Spleen (tissue), 13 donors: ENCODE measurements at regions of chr12 and their contacts with region 1.

Region 1: DNA sequence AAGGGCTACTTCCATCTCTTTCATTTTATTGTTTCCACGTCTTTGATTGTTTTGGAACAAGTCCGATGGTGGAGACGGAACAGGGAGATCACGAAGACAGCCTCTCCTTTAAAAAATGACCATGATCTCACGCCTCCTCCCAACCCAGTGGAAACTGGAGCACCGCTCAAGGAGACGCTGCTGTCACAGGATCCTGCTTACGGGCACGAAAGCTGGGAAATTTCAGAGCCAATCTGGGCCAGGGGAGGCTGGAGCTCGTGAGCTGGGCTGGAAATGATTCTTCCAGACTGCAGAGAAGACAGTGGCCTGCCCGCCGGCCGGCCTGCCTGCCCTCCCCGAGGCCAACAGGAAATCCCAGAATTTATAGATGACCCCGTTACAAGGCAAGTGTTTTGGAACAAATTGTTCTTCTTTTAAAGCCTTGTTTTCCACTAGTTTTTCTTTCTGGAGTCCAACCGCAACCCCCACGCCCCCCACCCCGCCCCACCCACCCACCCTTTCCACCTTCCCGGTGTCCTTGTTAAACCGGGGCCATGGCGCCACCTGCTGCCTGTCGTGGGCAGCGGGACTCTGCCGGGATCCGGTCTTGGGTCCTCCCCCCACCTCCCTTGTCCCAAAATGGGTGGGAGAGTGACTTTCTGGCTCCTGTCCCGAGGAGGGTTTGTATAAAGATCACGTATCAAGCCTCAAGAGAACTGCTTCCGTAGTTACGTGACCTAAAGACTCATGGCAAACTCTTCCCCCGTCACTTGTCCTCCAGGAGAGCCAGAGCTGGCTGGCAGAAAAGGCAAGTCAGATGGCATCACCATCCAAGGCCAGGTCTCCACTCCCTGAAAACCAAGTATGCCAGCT is 40.3 kb downstream of the MAP1LC3B2 start:
- DNase-seq: peak; percentile 94
- H3K4me3 ChIP-seq: peak overlapping the region in 3 of 8 donors; percentile 7 to 59 (median 22)
- H3K27ac ChIP-seq: peak overlapping the region; percentile 36 to 82 (median 66)
- H3K4me1 ChIP-seq: peaks cover 0 to 50% (median 25%) of the 10 kb centered on the region in 6 donors
- H3K27me3 ChIP-seq: peaks cover 0 to 7% (median 0%) of the 10 kb centered on the region in 7 donors
- CTCF ChIP-seq: peak in 9 of 11 experiments; percentile 31 to 82 (median 73)
- POLR2A ChIP-seq: no peak

Region 2: GRCh38 chr12:115998119-115998633 is 601.3 kb before region 1 on chr12:
- intact Hi-C with region 1: loop called (anchors 10 kb)
- DNase-seq: no peak
- H3K4me3 ChIP-seq: no peak overlapping the region
- H3K27ac ChIP-seq: peak overlapping the region in 1 of 8 donors; percentile 14
- H3K4me1 ChIP-seq: peaks cover 0 to 26% (median 6%) of the 10 kb centered on the region in 6 donors
- H3K27me3 ChIP-seq: no peaks in the 10 kb centered on the region
- CTCF ChIP-seq: peak in 10 of 11 experiments; percentile 40 to 84 (median 69)
- POLR2A ChIP-seq: no peak

Region 3: GRCh38 chr12:116066381-116067230 is 532.9 kb before region 1 on chr12:
- intact Hi-C with region 1: loop called (anchors 10 kb)
- DNase-seq: peak; percentile 80
- H3K4me3 ChIP-seq: no peak overlapping the region
- H3K27ac ChIP-seq: no peak overlapping the region
- H3K4me1 ChIP-seq: peaks cover 8 to 91% (median 35%) of the 10 kb centered on the region in 6 donors
- H3K27me3 ChIP-seq: no peaks in the 10 kb centered on the region
- CTCF ChIP-seq: peak; percentile 34 to 74 (median 68)
- POLR2A ChIP-seq: no peak

Region 4: DNA sequence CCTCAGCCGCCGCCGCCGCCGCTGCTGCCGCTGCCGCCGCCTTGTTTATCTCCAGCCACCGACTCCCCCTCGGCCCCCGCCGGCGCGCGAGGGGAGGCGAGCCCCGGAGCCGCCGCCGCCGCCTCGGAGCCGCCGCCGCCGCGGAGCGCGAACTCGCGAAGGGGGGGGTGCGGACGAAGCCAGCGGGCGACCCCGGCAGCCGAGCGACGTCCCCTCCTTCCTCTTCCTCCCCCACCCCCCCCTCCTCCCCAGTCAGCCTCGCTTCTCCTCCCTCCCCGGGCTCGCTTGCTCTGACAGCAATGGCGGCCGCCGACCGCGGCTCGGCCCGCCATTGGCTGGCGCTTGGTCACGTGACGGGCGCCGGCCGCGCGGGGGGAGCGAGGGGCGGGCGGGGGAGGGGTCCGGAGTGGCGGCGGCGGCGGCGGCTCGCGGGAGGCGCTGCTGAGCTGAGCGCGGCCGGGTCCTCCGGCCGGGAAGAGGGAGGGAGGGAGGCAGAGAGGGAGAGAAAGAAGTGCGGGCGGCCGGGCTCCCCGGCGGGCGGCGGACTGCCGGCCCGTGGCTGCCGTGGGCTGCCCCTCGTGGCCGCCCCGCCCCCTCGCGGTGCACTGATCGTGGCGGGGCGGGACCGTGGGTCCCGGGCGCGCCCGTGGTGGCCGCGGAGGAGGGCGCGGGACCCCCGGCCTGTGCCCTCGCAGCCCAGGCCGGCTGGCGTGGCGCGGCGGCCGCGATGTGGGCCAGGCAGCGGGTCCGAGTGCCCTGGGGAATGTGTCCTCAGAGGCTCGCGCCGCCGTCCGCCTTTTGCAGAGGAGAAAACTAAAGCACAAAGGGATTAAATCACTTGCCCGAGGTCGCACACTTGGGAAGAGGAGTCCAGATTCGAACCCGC is 321.9 kb before region 1 on chr12 and contains the start of gene MED13L:
- intact Hi-C with region 1: loop called (anchors 10 kb)
- DNase-seq: peak; percentile 96
- H3K4me3 ChIP-seq: peak within 1 kb of the TSS; percentile 63 to 88 (median 70)
- H3K27ac ChIP-seq: peak within 1 kb of the TSS; percentile 83 to 99 (median 96)
- H3K4me1 ChIP-seq: peaks cover 28 to 77% (median 51%) of the 10 kb centered on the region in 6 donors
- H3K27me3 ChIP-seq: no peaks in the 10 kb centered on the region
- CTCF ChIP-seq: peak in 6 of 11 experiments; percentile 25 to 69 (median 58)
- POLR2A ChIP-seq: no peak
- total RNA-seq, gene MED13L: 184 to 255 (median 205) TPM

Region 5: GRCh38 chr12:116559162-116559935 is 40.2 kb before region 1 on chr12 and contains the start of gene MAP1LC3B2:
- intact Hi-C with region 1: no loop called
- DNase-seq: peak; percentile 94
- H3K4me3 ChIP-seq: peak within 1 kb of the TSS in 5 of 8 donors; percentile 21 to 63 (median 30)
- H3K27ac ChIP-seq: peak within 1 kb of the TSS; percentile 78 to 93 (median 91)
- H3K4me1 ChIP-seq: peaks cover 12 to 53% (median 40%) of the 10 kb centered on the region in 6 donors
- H3K27me3 ChIP-seq: no peaks in the 10 kb centered on the region
- CTCF ChIP-seq: no peak
- POLR2A ChIP-seq: no peak
- total RNA-seq, gene MAP1LC3B2: 1.4 to 3.0 (median 2.1) TPM

Region 6: GRCh38 chr12:116717466-116718437 is 118.2 kb after region 1 on chr12:
- intact Hi-C with region 1: no loop called
- DNase-seq: no peak
- H3K4me3 ChIP-seq: no peak overlapping the region
- H3K27ac ChIP-seq: no peak overlapping the region
- H3K4me1 ChIP-seq: no peaks in the 10 kb centered on the region
- H3K27me3 ChIP-seq: no peaks in the 10 kb centered on the region
- CTCF ChIP-seq: no peak
- POLR2A ChIP-seq: no peak